HCT116 (cell line): ENCODE measurements at regions of chr3 and their contacts with region 1.

Region 1: GRCh38 chr3:31196881-31197364 is 302.5 kb upstream of the GADL1 start:
- DNase-seq: no peak
- ATAC-seq: no peak
- H3K4me3 ChIP-seq: no peak overlapping the region
- H3K27ac ChIP-seq: no peak overlapping the region
- H3K4me1 ChIP-seq: no peaks in the 10 kb centered on the region
- H3K27me3 ChIP-seq: no peaks in the 10 kb centered on the region
- CTCF ChIP-seq: no peak
- POLR2A ChIP-seq: no peak
- RAD21 ChIP-seq: no peak

Region 2: DNA sequence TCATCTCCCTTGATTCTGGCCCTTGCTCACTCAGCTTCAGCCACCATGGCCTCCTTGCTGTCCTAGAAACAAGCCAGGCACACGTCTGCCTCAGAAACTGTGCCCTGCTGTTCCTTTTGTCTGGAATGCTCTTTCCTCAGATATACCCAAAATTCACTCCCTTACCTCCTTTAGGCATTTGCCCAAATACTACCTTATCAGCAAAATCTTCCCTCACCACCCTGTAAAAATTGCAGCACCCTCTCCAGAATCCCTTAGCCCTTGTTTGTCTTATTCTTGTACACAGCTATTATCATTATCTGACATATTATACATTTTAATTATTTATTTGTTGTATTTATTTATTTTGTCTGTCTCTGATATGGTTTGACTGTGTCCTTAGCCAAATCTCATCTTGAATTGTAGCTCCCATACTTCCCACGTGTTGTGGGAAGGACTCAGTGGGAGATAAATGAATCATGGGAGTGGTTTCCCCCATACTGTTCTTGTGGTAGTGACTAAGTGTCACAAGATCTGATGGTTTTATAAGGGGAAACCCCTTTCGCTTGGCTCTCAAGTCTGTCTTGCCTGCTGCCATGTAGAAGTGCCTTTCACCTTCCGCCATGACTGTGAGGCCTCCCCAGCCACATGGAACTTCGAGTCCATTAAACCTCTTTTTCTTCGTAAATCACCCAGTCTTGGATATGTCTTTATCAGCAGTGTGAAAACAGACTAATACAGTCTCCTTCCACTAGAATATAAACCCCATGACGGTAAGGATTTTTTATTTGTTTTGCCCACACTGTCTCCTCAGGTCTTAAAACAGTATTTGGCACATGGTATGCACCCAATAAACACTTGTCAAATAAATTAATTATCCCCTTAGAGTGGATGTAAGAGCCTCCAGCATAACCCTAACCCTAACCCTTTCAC is 275.8 kb after region 1 on chr3:
- CTCF ChIA-PET with region 1: no interaction called
- POLR2A ChIA-PET with region 1: no interaction called
- RAD21 ChIA-PET with region 1: no interaction called
- intact Hi-C with region 1: no loop called
- DNase-seq: no peak
- ATAC-seq: no peak
- H3K4me3 ChIP-seq: no peak overlapping the region
- H3K27ac ChIP-seq: no peak overlapping the region
- H3K4me1 ChIP-seq: no peaks in the 10 kb centered on the region
- H3K27me3 ChIP-seq: no peaks in the 10 kb centered on the region
- CTCF ChIP-seq: no peak
- POLR2A ChIP-seq: no peak
- RAD21 ChIP-seq: no peak

Region 3: DNA sequence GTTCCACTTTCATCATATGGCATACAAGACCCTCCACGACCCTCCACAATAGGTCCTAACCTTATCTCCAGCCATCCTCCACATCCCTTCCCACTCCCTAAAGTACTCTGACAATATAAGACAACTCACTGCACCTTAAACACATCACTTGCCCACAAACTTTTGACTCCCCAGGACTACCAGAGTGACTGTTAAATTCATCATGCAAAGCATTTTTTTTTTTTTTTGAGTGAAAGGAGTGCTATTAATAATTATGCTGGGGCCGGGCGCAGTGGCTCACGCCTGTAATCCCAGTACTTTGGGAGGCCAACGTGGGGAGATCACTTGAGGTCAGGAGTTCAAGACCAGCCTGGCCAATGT is 728.3 kb after region 1 on chr3:
- CTCF ChIA-PET with region 1: no interaction called
- POLR2A ChIA-PET with region 1: no interaction called
- RAD21 ChIA-PET with region 1: no interaction called
- intact Hi-C with region 1: loop called (anchors 5 kb)
- DNase-seq: no peak
- ATAC-seq: no peak
- H3K4me3 ChIP-seq: no peak overlapping the region
- H3K27ac ChIP-seq: no peak overlapping the region
- H3K4me1 ChIP-seq: peaks cover 14 to 19% of the 10 kb centered on the region in 2 experiments; a peak in 3 of 4 replicates
- H3K27me3 ChIP-seq: no peaks in the 10 kb centered on the region
- CTCF ChIP-seq: no peak
- POLR2A ChIP-seq: no peak
- RAD21 ChIP-seq: no peak

Region 4: DNA sequence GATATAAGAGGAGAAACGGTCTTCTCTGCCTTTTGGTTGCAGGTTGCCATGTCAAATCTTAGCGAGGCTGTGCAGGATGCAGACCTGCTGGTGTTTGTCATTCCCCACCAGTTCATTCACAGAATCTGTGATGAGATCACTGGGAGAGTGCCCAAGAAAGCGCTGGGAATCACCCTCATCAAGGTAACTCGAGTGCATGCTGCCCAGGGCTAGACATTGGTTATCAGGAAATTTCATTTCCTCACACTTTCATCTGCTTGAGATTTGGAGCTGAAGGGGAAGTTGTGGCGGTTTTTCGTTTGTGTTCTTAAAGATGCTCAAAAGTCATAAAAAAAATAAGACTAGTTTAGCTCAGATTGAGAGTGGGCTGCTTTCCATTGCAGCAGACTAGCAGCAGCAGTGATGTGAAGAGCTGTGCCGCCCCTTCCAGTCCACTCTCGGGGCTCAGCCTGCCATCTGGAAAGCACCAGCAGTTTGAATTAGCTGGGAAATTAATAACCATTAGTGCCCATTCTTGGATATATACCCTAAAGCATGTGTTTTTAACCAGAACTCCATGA is 941.7 kb after region 1 on chr3:
- CTCF ChIA-PET with region 1: no interaction called
- POLR2A ChIA-PET with region 1: no interaction called
- RAD21 ChIA-PET with region 1: no interaction called
- intact Hi-C with region 1: no loop called
- DNase-seq: no peak
- ATAC-seq: no peak
- H3K4me3 ChIP-seq: no peak overlapping the region
- H3K27ac ChIP-seq: no peak overlapping the region
- H3K4me1 ChIP-seq: no peaks in the 10 kb centered on the region
- H3K27me3 ChIP-seq: no peaks in the 10 kb centered on the region
- CTCF ChIP-seq: no peak
- POLR2A ChIP-seq: no peak
- RAD21 ChIP-seq: no peak